Caco-2 (cell line): ENCODE measurements at regions of chr14 and their contacts with region 1.

Region 1: DNA sequence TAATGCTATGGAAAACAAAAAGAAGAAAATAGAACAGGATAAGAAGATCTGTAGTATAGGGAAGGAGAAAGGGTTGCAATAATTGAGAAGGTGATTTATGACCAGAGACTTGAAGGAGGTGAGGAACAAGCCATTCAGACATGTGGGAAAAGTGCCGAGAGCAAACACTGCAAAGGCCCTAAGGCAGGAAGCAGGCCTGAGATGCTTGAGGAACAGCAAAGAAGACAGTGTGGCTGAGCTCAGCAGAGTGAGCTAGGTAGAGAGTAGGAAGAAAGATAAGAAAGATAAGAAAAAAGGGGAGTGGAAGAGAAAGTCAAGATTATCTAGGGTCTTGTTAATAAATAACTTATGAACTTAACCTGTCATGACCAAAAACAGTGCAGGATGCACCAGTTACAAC is 671.8 kb downstream of the RPS29 start:
- DNase-seq: peak; percentile 69 to 88
- H3K4me3 ChIP-seq: no peak overlapping the region
- H3K4me3 Mint-ChIP-seq: no peak overlapping the region
- H3K27ac Mint-ChIP-seq: no peak overlapping the region
- H3K4me1 ChIP-seq: peaks cover 29% of the 10 kb centered on the region
- H3K4me1 Mint-ChIP-seq: peaks cover 24% of the 10 kb centered on the region
- H3K27me3 ChIP-seq: no peaks in the 10 kb centered on the region
- H3K27me3 Mint-ChIP-seq: no peaks in the 10 kb centered on the region
- CTCF ChIP-seq: no peak

Region 2: DNA sequence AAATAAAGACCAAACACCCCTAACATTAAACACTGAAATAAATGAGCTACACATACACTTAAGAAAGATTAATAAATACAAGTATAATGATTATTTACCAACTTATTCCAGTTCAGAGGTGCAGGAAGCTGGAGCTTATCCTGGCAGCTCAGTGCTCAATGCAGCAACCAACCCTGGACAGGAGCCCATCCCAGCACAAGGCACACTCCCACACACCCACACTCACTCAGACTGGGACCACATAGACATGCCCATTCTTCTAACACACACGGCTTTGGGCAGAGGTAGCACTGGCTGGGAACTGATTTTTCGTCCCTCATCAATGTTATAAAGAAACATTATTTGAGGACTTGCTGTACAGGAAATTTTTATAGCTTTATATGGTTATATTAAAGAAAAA is 125.6 kb before region 1 on chr14:
- CTCF ChIA-PET with region 1: no interaction called
- POLR2A ChIA-PET with region 1: no interaction called
- intact Hi-C with region 1: no loop called
- DNase-seq: no peak
- H3K4me3 ChIP-seq: no peak overlapping the region
- H3K4me3 Mint-ChIP-seq: no peak overlapping the region
- H3K27ac Mint-ChIP-seq: no peak overlapping the region
- H3K4me1 ChIP-seq: no peaks in the 10 kb centered on the region
- H3K4me1 Mint-ChIP-seq: no peaks in the 10 kb centered on the region
- H3K27me3 ChIP-seq: no peaks in the 10 kb centered on the region
- H3K27me3 Mint-ChIP-seq: no peaks in the 10 kb centered on the region
- CTCF ChIP-seq: no peak

Region 3: DNA sequence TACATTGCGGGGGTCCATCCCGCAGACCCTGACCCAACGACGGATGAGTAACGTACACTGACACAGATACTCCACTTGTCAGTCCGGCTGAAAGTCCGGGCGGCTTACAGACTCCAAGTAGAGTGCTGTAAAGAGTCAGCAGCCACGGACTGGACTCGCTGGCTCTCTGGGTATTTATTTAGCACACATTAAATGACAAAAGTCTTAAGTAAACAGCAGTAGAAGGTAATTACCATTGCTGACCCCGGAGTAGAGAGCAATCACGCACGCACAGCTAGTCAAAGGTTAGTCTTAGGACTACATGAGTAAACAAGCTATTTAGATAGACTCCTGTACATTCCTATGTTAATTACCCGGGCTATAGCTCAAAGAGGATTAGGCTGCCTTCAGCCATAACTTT is 109.1 kb before region 1 on chr14:
- CTCF ChIA-PET with region 1: no interaction called
- POLR2A ChIA-PET with region 1: no interaction called
- intact Hi-C with region 1: loop called (anchors 2 kb)
- DNase-seq: peak; percentile 74 to 87
- H3K4me3 ChIP-seq: no peak overlapping the region
- H3K4me3 Mint-ChIP-seq: peak overlapping the region; percentile 42
- H3K27ac Mint-ChIP-seq: peak overlapping the region; percentile 76
- H3K4me1 ChIP-seq: peaks cover 10% of the 10 kb centered on the region
- H3K4me1 Mint-ChIP-seq: peaks cover 16% of the 10 kb centered on the region
- H3K27me3 ChIP-seq: no peaks in the 10 kb centered on the region
- H3K27me3 Mint-ChIP-seq: no peaks in the 10 kb centered on the region
- CTCF ChIP-seq: no peak

Region 4: GRCh38 chr14:49106741-49107667 is 192.6 kb after region 1 on chr14:
- CTCF ChIA-PET with region 1: interaction called, 3 read pairs
- POLR2A ChIA-PET with region 1: no interaction called
- intact Hi-C with region 1: loop called (anchors 2 kb)
- DNase-seq: peak; percentile 80 to 91
- H3K4me3 ChIP-seq: no peak overlapping the region; the same call in 1 of the 2 replicates
- H3K4me3 Mint-ChIP-seq: peak overlapping the region; percentile 42
- H3K27ac Mint-ChIP-seq: peak overlapping the region; percentile 76
- H3K4me1 ChIP-seq: peaks cover 32% of the 10 kb centered on the region
- H3K4me1 Mint-ChIP-seq: peaks cover 24% of the 10 kb centered on the region
- H3K27me3 ChIP-seq: no peaks in the 10 kb centered on the region
- H3K27me3 Mint-ChIP-seq: no peaks in the 10 kb centered on the region
- CTCF ChIP-seq: peak in 1 of 2 experiments; percentile 17